ENCODE measurements at regions of chr13 and their contacts with region 1.

Region 1: DNA sequence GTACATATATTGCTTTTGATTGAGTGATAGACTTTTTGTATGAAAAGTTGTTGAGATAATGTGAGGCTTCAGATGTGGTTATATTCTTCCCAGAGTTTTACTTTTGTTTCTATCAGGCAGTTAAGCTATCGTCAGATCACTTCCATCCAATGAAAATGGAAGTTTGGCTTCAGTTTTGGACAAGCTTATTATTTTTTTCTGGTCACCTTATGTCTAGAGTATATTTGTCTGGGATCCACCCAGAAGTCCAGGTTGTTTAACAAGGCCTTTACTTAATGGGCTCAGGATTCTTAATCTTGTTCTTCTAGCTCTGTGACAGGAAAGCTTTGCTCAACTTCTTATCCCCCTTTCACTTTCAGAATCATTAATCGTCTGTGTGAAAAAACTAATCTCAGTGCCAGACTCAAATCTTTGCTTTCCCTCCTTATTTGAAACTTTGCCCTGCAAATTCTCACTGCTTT is 150.9 kb downstream of the PDS5B start:
- DNase-seq: peak in 2 of 9 experiments; percentile 43 to 70
- ATAC-seq: peak; percentile 79
- H3K4me3 ChIP-seq: peak overlapping the region; percentile 41 to 48
- H3K4me3 Mint-ChIP-seq: peak overlapping the region; percentile 76
- H3K27ac ChIP-seq: peak overlapping the region; percentile 76 to 91
- H3K27ac Mint-ChIP-seq: peak overlapping the region; percentile 92
- H3K4me1 ChIP-seq: peaks cover 14% of the 10 kb centered on the region
- H3K4me1 Mint-ChIP-seq: peaks cover 30% of the 10 kb centered on the region
- H3K27me3 ChIP-seq: no peaks in the 10 kb centered on the region
- H3K27me3 Mint-ChIP-seq: no peaks in the 10 kb centered on the region
- CTCF ChIP-seq: no peak

Region 2: GRCh38 chr13:32086366-32086765 is 650.8 kb before region 1 on chr13:
- CTCF ChIA-PET with region 1: no interaction called
- POLR2A ChIA-PET with region 1: no interaction called
- intact Hi-C with region 1: no loop called
- DNase-seq: no peak
- ATAC-seq: no peak
- H3K4me3 ChIP-seq: no peak overlapping the region
- H3K4me3 Mint-ChIP-seq: no peak overlapping the region
- H3K27ac ChIP-seq: no peak overlapping the region
- H3K27ac Mint-ChIP-seq: no peak overlapping the region
- H3K4me1 ChIP-seq: no peaks in the 10 kb centered on the region
- H3K4me1 Mint-ChIP-seq: no peaks in the 10 kb centered on the region
- H3K27me3 ChIP-seq: no peaks in the 10 kb centered on the region
- H3K27me3 Mint-ChIP-seq: no peaks in the 10 kb centered on the region
- CTCF ChIP-seq: no peak

Region 3: GRCh38 chr13:32409561-32410421 is 327.4 kb before region 1 on chr13:
- CTCF ChIA-PET with region 1: no interaction called
- POLR2A ChIA-PET with region 1: no interaction called
- intact Hi-C with region 1: no loop called
- DNase-seq: no peak
- ATAC-seq: no peak
- H3K4me3 ChIP-seq: no peak overlapping the region
- H3K4me3 Mint-ChIP-seq: no peak overlapping the region
- H3K27ac ChIP-seq: no peak overlapping the region
- H3K27ac Mint-ChIP-seq: no peak overlapping the region
- H3K4me1 ChIP-seq: no peaks in the 10 kb centered on the region
- H3K4me1 Mint-ChIP-seq: peaks cover 18% of the 10 kb centered on the region
- H3K27me3 ChIP-seq: no peaks in the 10 kb centered on the region
- H3K27me3 Mint-ChIP-seq: no peaks in the 10 kb centered on the region
- CTCF ChIP-seq: no peak

Region 4: GRCh38 chr13:32555613-32556012 is 181.5 kb before region 1 on chr13:
- CTCF ChIA-PET with region 1: no interaction called
- POLR2A ChIA-PET with region 1: no interaction called
- intact Hi-C with region 1: no loop called
- DNase-seq: no peak
- ATAC-seq: no peak
- H3K4me3 ChIP-seq: no peak overlapping the region
- H3K4me3 Mint-ChIP-seq: no peak overlapping the region
- H3K27ac ChIP-seq: no peak overlapping the region
- H3K27ac Mint-ChIP-seq: no peak overlapping the region
- H3K4me1 ChIP-seq: no peaks in the 10 kb centered on the region
- H3K4me1 Mint-ChIP-seq: no peaks in the 10 kb centered on the region
- H3K27me3 ChIP-seq: no peaks in the 10 kb centered on the region
- H3K27me3 Mint-ChIP-seq: peaks cover 4% of the 10 kb centered on the region
- CTCF ChIP-seq: no peak

Region 5: GRCh38 chr13:32695602-32696250 is 41.4 kb before region 1 on chr13:
- CTCF ChIA-PET with region 1: no interaction called
- POLR2A ChIA-PET with region 1: interaction called, 4 read pairs
- intact Hi-C with region 1: loop called in 1 of 2 experiments (anchors 5 kb)
- DNase-seq: no peak
- ATAC-seq: no peak
- H3K4me3 ChIP-seq: no peak overlapping the region
- H3K4me3 Mint-ChIP-seq: no peak overlapping the region
- H3K27ac ChIP-seq: no peak overlapping the region
- H3K27ac Mint-ChIP-seq: no peak overlapping the region
- H3K4me1 ChIP-seq: no peaks in the 10 kb centered on the region
- H3K4me1 Mint-ChIP-seq: no peaks in the 10 kb centered on the region
- H3K27me3 ChIP-seq: no peaks in the 10 kb centered on the region
- H3K27me3 Mint-ChIP-seq: no peaks in the 10 kb centered on the region
- CTCF ChIP-seq: no peak

Region 6: GRCh38 chr13:32752997-32753606 is 16.0 kb after region 1 on chr13:
- CTCF ChIA-PET with region 1: no interaction called
- POLR2A ChIA-PET with region 1: no interaction called
- intact Hi-C with region 1: no loop called
- DNase-seq: no peak
- ATAC-seq: no peak
- H3K4me3 ChIP-seq: no peak overlapping the region
- H3K4me3 Mint-ChIP-seq: no peak overlapping the region
- H3K27ac ChIP-seq: no peak overlapping the region
- H3K27ac Mint-ChIP-seq: no peak overlapping the region
- H3K4me1 ChIP-seq: no peaks in the 10 kb centered on the region
- H3K4me1 Mint-ChIP-seq: no peaks in the 10 kb centered on the region
- H3K27me3 ChIP-seq: no peaks in the 10 kb centered on the region
- H3K27me3 Mint-ChIP-seq: no peaks in the 10 kb centered on the region
- CTCF ChIP-seq: no peak

Region 7: GRCh38 chr13:32779119-32779518 is 42.0 kb after region 1 on chr13:
- CTCF ChIA-PET with region 1: no interaction called
- POLR2A ChIA-PET with region 1: interaction called, 4 read pairs
- intact Hi-C with region 1: loop called in 1 of 2 experiments (anchors 5 kb)
- DNase-seq: no peak
- ATAC-seq: no peak
- H3K4me3 ChIP-seq: no peak overlapping the region
- H3K4me3 Mint-ChIP-seq: no peak overlapping the region
- H3K27ac ChIP-seq: no peak overlapping the region
- H3K27ac Mint-ChIP-seq: no peak overlapping the region
- H3K4me1 ChIP-seq: peaks cover 10% of the 10 kb centered on the region
- H3K4me1 Mint-ChIP-seq: peaks cover 17% of the 10 kb centered on the region
- H3K27me3 ChIP-seq: no peaks in the 10 kb centered on the region
- H3K27me3 Mint-ChIP-seq: no peaks in the 10 kb centered on the region
- CTCF ChIP-seq: no peak

Measured in CD8-positive, alpha-beta T cell (primary cell).